PC-3 (cell line): ENCODE measurements at regions of chr18 and their contacts with region 1.

Region 1: GRCh38 chr18:32470713-32471633 is at the start of gene GAREM1:
- DNase-seq: peak; percentile 81
- ATAC-seq: peak; percentile 85
- H3K4me3 ChIP-seq: peak within 1 kb of the TSS; percentile 71
- H3K27ac ChIP-seq: no peak within 1 kb of the TSS
- H3K4me1 ChIP-seq: peaks cover 4% of the 10 kb centered on the region; the same call in 1 of the 2 replicates
- H3K27me3 ChIP-seq: no peaks in the 10 kb centered on the region
- CTCF ChIP-seq: peak; percentile 33; the same call in 1 of the 2 replicates
- total RNA-seq, gene GAREM1: 0.86 and 1.8 TPM in 2 replicates

Region 2: GRCh38 chr18:31990823-31991222 is 480.1 kb before region 1 on chr18:
- CTCF ChIA-PET with region 1: no interaction called
- POLR2A ChIA-PET with region 1: no interaction called
- intact Hi-C with region 1: no loop called
- DNase-seq: no peak
- ATAC-seq: no peak; the same call in 1 of the 2 replicates
- H3K4me3 ChIP-seq: no peak overlapping the region
- H3K27ac ChIP-seq: no peak overlapping the region
- H3K4me1 ChIP-seq: no peaks in the 10 kb centered on the region
- H3K27me3 ChIP-seq: no peaks in the 10 kb centered on the region
- CTCF ChIP-seq: no peak

Region 3: GRCh38 chr18:32018331-32019250 is 452.4 kb before region 1 on chr18 and contains the start of gene RNF125:
- CTCF ChIA-PET with region 1: interaction called, 12 read pairs
- POLR2A ChIA-PET with region 1: no interaction called
- intact Hi-C with region 1: no loop called
- DNase-seq: peak; percentile 60
- ATAC-seq: peak; percentile 90
- H3K4me3 ChIP-seq: peak within 1 kb of the TSS; percentile 69
- H3K27ac ChIP-seq: no peak within 1 kb of the TSS
- H3K4me1 ChIP-seq: no peaks in the 10 kb centered on the region
- H3K27me3 ChIP-seq: no peaks in the 10 kb centered on the region
- CTCF ChIP-seq: no peak
- total RNA-seq, gene RNF125: 1.1 and 1.2 TPM in 2 replicates

Region 4: DNA sequence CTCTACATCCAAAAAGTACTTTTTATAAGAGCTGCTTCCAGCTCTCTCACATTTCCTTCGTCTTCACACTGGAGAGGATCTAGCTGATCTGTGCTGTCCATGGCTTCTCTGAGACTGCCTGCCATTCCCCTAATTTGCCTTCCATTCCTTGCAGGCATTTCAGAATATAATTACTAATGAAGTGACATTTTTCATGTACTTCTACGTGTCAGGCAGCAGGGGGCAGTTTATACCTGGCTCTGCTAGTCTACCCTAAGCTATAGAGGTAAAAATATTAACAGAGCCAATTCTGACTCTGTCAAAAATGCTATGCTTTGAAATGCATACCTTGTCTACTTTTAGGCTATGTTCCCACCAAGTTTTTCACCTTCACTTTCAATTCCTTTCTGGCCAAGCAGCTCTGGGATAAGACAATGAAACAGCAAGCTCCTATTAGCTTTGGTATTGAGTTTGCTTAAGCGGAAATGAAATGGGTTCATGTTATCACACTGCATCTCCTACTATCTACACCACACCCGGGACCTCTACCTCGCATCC is 199.2 kb before region 1 on chr18:
- CTCF ChIA-PET with region 1: interaction called, 21 read pairs
- POLR2A ChIA-PET with region 1: no interaction called
- intact Hi-C with region 1: loop called (anchors 1 kb)
- DNase-seq: peak; percentile 30
- ATAC-seq: peak; percentile 68
- H3K4me3 ChIP-seq: no peak overlapping the region
- H3K27ac ChIP-seq: no peak overlapping the region
- H3K4me1 ChIP-seq: no peaks in the 10 kb centered on the region
- H3K27me3 ChIP-seq: no peaks in the 10 kb centered on the region
- CTCF ChIP-seq: peak; percentile 62

Region 5: DNA sequence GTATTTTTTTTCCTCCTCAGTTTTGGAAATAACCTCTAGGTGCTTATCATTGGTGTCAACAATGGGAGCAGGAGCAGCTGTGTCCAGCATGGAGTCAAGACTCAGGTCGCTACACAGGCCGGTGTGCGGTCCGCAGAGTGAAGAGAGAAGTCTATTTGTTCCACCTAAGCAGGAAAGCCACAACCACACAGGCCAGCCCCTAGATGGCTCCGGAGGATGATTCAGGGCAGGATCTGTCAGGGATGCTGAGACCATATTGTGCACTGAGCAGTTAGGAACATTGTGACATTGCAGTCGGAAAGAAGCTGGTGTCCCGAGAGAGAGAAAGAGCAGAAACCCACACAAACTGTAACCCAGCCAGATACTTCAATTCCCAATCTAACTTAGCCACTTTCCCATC is 137.2 kb before region 1 on chr18:
- CTCF ChIA-PET with region 1: interaction called, 12 read pairs
- POLR2A ChIA-PET with region 1: no interaction called
- intact Hi-C with region 1: no loop called
- DNase-seq: peak; percentile 19
- ATAC-seq: peak; percentile 80
- H3K4me3 ChIP-seq: no peak overlapping the region
- H3K27ac ChIP-seq: no peak overlapping the region
- H3K4me1 ChIP-seq: peaks cover 6% of the 10 kb centered on the region; the same call in 1 of the 2 replicates
- H3K27me3 ChIP-seq: no peaks in the 10 kb centered on the region
- CTCF ChIP-seq: peak; percentile 32; the same call in 1 of the 2 replicates

Region 6: DNA sequence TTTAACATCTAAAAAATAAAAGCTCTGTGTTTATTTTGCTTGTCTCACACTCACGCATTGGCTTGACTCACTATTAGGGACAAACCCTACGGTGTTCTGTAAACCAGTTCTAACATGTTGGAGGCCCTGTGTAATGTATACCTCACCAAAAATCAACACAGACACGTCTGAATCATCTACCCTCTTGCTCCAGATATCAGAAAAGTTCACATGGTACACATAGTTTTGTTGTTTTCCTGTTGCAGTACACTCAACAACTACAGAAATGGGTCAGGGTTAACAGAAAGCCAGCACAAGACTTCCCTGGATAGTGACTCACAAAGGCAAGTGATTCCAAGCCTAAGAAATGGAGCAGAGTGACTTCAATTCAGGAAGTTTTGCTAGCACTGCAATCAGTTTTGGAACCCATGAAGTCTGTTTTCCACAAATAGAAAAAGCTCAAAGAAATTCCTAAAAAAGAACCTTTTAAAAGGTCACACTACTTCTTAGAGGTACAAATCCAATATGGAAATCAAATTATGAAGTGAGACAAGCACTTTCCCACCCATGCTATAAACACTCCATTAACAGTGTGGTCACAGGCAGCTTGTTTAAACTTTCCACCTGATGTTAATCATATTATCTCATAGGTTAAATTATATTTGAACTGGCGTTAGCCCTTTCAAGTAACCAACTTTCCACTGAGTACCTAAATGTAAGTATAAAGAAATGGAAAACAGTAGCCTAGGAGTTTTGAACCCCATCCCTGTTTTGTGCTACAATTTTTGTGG is 87.7 kb before region 1 on chr18:
- CTCF ChIA-PET with region 1: interaction called, 7 read pairs
- POLR2A ChIA-PET with region 1: interaction called, 4 read pairs
- intact Hi-C with region 1: loop called (anchors 1 kb)
- DNase-seq: peak; percentile 79
- ATAC-seq: peak; percentile 97
- H3K4me3 ChIP-seq: peak overlapping the region; percentile 37; the same call in 1 of the 2 replicates
- H3K27ac ChIP-seq: peak overlapping the region; percentile 96
- H3K4me1 ChIP-seq: peaks cover 31% of the 10 kb centered on the region
- H3K27me3 ChIP-seq: no peaks in the 10 kb centered on the region
- CTCF ChIP-seq: no peak